Endothelial cell of umbilical vein (primary cell): ENCODE measurements at regions of chr4 and their contacts with region 1.

Region 1: DNA sequence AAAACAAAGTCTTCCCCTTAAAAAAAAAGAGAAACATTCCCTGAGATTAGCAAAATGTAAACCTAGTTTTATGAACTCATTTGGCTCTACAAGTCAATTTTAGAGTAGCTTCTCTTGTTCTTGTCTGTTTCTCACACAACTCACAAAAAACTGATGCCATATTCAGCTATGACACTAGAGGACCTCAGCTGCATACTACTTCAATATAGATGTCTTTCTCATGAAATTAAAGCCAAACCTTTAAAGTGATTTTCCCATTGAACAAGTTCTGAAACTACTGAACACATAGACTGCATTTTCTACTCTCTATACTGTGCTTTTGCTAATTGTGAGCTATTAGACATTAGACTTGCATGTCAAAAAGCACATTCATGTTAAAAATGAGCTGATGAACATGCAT is 49.8 kb downstream of the TBCK start:
- DNase-seq: peak; percentile 72
- H3K4me3 ChIP-seq: no peak overlapping the region
- H3K27ac ChIP-seq: no peak overlapping the region
- H3K4me1 ChIP-seq: peaks cover 6% of the 10 kb centered on the region
- H3K27me3 ChIP-seq: no peaks in the 10 kb centered on the region
- CTCF ChIP-seq: peak; percentile 36 to 40
- POLR2A ChIP-seq: no peak

Region 2: DNA sequence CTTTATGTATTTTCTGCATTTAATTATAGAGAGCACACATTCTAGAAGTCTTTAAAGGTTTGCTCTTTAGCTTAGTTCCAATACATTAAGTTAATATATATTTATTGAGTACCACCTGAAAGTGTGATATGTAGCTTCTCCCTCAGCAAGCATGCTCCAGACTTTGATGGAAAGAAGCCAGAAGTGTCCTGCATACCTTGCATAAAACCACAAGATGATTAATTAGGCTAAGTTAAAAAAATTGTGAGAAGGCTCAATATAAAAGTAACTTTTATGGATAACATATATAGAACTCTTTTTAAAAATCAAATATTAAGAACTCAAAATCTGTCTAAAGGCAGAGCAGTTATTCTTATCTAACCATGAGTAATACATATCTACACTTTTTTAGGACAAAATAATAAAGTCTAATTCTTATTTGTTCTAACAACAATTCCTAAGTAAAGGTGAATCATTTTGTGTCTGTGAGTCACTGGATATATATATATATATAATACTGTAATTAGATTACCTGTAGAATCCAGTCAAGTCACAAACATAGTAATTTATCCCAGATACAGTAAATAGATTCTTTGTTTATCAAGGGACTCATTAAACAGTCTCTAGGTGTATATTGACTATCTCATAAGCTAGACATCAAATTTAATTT is 609.0 kb before region 1 on chr4:
- CTCF ChIA-PET with region 1: no interaction called
- POLR2A ChIA-PET with region 1: no interaction called
- dilution Hi-C with region 1: no loop called
- intact Hi-C with region 1: no loop called
- DNase-seq: no peak
- H3K4me3 ChIP-seq: no peak overlapping the region
- H3K27ac ChIP-seq: no peak overlapping the region
- H3K4me1 ChIP-seq: no peaks in the 10 kb centered on the region
- H3K27me3 ChIP-seq: peaks cover 2 to 3% of the 10 kb centered on the region in 2 experiments
- CTCF ChIP-seq: no peak
- POLR2A ChIP-seq: no peak

Region 3: GRCh38 chr4:106315968-106316772 is 50.0 kb after region 1 on chr4 and contains the starts of genes AIMP1 and TBCK:
- CTCF ChIA-PET with region 1: interaction called, 14 read pairs
- POLR2A ChIA-PET with region 1: interaction called, 3 read pairs
- dilution Hi-C with region 1: no loop called
- intact Hi-C with region 1: loop called (anchors 1 kb)
- DNase-seq: peak; percentile 92
- H3K4me3 ChIP-seq: peak within 1 kb of the TSS; percentile 49 to 96 (median 83)
- H3K27ac ChIP-seq: peak within 1 kb of the TSS; percentile 92
- H3K4me1 ChIP-seq: peaks cover 20% of the 10 kb centered on the region
- H3K27me3 ChIP-seq: no peaks in the 10 kb centered on the region
- CTCF ChIP-seq: no peak
- POLR2A ChIP-seq: peak; percentile 78
- total RNA-seq, gene AIMP1: 42.4 and 44.7 TPM in 2 replicates
- total RNA-seq, gene TBCK: 29.0 and 38.6 TPM in 2 replicates

Region 4: GRCh38 chr4:106502106-106502699 is 236.0 kb after region 1 on chr4:
- CTCF ChIA-PET with region 1: interaction called, 22 read pairs
- POLR2A ChIA-PET with region 1: no interaction called
- dilution Hi-C with region 1: no loop called
- intact Hi-C with region 1: loop called (anchors 1 kb)
- DNase-seq: peak; percentile 66
- H3K4me3 ChIP-seq: no peak overlapping the region
- H3K27ac ChIP-seq: no peak overlapping the region
- H3K4me1 ChIP-seq: no peaks in the 10 kb centered on the region
- H3K27me3 ChIP-seq: no peaks in the 10 kb centered on the region
- CTCF ChIP-seq: peak; percentile 69 to 72
- POLR2A ChIP-seq: no peak

Region 5: DNA sequence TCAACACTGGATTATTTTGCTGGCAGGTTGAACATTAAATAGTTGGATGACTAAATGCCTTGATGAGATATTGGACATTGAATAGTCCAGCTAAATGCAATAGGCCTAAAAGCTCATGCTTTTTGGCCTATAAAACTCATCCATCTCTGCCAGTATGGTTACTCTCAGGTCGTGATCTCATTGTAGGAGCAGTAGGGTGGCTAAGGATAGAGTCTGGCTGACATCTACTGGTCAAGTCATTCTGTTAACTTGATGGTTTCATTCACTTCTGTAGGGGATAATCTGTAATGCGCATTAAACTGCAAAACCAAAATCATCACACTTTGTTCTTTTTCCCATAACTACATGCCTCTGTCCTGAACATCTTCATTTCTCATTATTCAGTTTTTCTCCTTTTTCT is 542.9 kb after region 1 on chr4:
- CTCF ChIA-PET with region 1: interaction called, 13 read pairs
- POLR2A ChIA-PET with region 1: no interaction called
- dilution Hi-C with region 1: no loop called
- intact Hi-C with region 1: loop called (anchors 1 kb)
- DNase-seq: peak; percentile 66
- H3K4me3 ChIP-seq: no peak overlapping the region
- H3K27ac ChIP-seq: no peak overlapping the region
- H3K4me1 ChIP-seq: no peaks in the 10 kb centered on the region
- H3K27me3 ChIP-seq: no peaks in the 10 kb centered on the region
- CTCF ChIP-seq: peak; percentile 27 to 30
- POLR2A ChIP-seq: no peak

Region 6: DNA sequence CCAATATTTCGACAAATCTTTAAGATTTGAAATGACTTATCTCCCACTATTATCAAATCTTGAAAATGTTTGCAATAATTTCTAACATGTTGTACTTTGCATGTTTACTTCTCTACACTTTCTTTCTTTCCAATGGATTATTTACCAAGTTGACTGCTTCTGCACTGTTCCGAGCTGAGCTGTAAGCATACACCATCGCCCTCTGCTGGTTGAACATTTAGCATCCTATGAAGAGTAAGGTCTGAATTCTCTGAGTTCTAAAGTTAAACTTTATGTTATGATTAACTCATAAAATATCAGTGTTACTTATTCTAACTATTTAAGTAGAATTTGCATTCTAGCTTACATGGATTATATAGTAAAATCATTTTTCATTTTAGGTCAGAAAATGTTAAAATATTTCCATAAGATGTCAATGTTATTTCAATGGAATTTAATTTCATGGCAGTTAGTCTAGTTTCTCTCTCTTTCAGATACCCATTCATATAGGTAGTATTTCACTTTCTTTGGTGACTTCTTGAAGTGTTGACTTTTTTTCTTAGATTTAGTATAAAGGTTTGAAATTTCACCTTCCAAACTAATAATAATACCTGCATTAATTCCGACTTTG is 632.5 kb after region 1 on chr4:
- CTCF ChIA-PET with region 1: interaction called, 48 read pairs
- POLR2A ChIA-PET with region 1: no interaction called
- dilution Hi-C with region 1: no loop called
- intact Hi-C with region 1: loop called (anchors 1 kb)
- DNase-seq: peak; percentile 61
- H3K4me3 ChIP-seq: no peak overlapping the region
- H3K27ac ChIP-seq: no peak overlapping the region
- H3K4me1 ChIP-seq: no peaks in the 10 kb centered on the region
- H3K27me3 ChIP-seq: no peaks in the 10 kb centered on the region
- CTCF ChIP-seq: peak; percentile 65 to 69
- POLR2A ChIP-seq: no peak